Mammary epithelial cell (primary cell): ENCODE measurements at regions of chr2 and their contacts with region 1.

Region 1: GRCh38 chr2:231297108-231297908 is 98.2 kb upstream of the B3GNT7 start:
- DNase-seq: peak; percentile 23
- H3K4me3 ChIP-seq: no peak overlapping the region
- H3K27ac ChIP-seq: no peak overlapping the region
- H3K4me1 ChIP-seq: peaks cover 4% of the 10 kb centered on the region
- H3K27me3 ChIP-seq: no peaks in the 10 kb centered on the region
- CTCF ChIP-seq: peak; percentile 64 to 84

Region 2: GRCh38 chr2:231270221-231271114 is 26.8 kb before region 1 on chr2:
- CTCF ChIA-PET with region 1: no interaction called
- dilution Hi-C with region 1: no loop called
- in situ Hi-C with region 1: no loop called
- intact Hi-C with region 1: no loop called
- DNase-seq: no peak
- H3K4me3 ChIP-seq: no peak overlapping the region
- H3K27ac ChIP-seq: no peak overlapping the region
- H3K4me1 ChIP-seq: no peaks in the 10 kb centered on the region
- H3K27me3 ChIP-seq: no peaks in the 10 kb centered on the region
- CTCF ChIP-seq: no peak

Region 3: GRCh38 chr2:231334179-231334930 is 37.0 kb after region 1 on chr2:
- CTCF ChIA-PET with region 1: no interaction called
- dilution Hi-C with region 1: no loop called
- in situ Hi-C with region 1: no loop called
- intact Hi-C with region 1: no loop called
- DNase-seq: no peak
- H3K4me3 ChIP-seq: no peak overlapping the region
- H3K27ac ChIP-seq: no peak overlapping the region
- H3K4me1 ChIP-seq: peaks cover 7% of the 10 kb centered on the region
- H3K27me3 ChIP-seq: no peaks in the 10 kb centered on the region
- CTCF ChIP-seq: no peak

Region 4: GRCh38 chr2:231399853-231400680 is 102.8 kb after region 1 on chr2:
- CTCF ChIA-PET with region 1: interaction called, 13 read pairs
- dilution Hi-C with region 1: no loop called
- in situ Hi-C with region 1: loop called in 1 of 2 experiments (anchors 10 kb)
- intact Hi-C with region 1: loop called (anchors 1 kb)
- DNase-seq: peak; percentile 25
- H3K4me3 ChIP-seq: no peak overlapping the region
- H3K27ac ChIP-seq: no peak overlapping the region
- H3K4me1 ChIP-seq: peaks cover 13% of the 10 kb centered on the region
- H3K27me3 ChIP-seq: peaks cover 8% of the 10 kb centered on the region
- CTCF ChIP-seq: peak; percentile 1 to 18

Region 5: GRCh38 chr2:231452799-231453508 is 155.6 kb after region 1 on chr2:
- CTCF ChIA-PET with region 1: no interaction called
- dilution Hi-C with region 1: no loop called
- in situ Hi-C with region 1: no loop called
- intact Hi-C with region 1: loop called (anchors 1 kb)
- DNase-seq: no peak
- H3K4me3 ChIP-seq: no peak overlapping the region
- H3K27ac ChIP-seq: no peak overlapping the region
- H3K4me1 ChIP-seq: no peaks in the 10 kb centered on the region
- H3K27me3 ChIP-seq: no peaks in the 10 kb centered on the region
- CTCF ChIP-seq: no peak

Region 6: GRCh38 chr2:231557571-231558237 is 260.4 kb after region 1 on chr2:
- CTCF ChIA-PET with region 1: no interaction called
- dilution Hi-C with region 1: no loop called
- in situ Hi-C with region 1: no loop called
- intact Hi-C with region 1: loop called (anchors 5 kb)
- DNase-seq: peak; percentile 50
- H3K4me3 ChIP-seq: no peak overlapping the region
- H3K27ac ChIP-seq: no peak overlapping the region
- H3K4me1 ChIP-seq: no peaks in the 10 kb centered on the region
- H3K27me3 ChIP-seq: no peaks in the 10 kb centered on the region
- CTCF ChIP-seq: peak; percentile 62 to 78